ENCODE measurements at regions of chr11 and their contacts with region 1.

Region 1: DNA sequence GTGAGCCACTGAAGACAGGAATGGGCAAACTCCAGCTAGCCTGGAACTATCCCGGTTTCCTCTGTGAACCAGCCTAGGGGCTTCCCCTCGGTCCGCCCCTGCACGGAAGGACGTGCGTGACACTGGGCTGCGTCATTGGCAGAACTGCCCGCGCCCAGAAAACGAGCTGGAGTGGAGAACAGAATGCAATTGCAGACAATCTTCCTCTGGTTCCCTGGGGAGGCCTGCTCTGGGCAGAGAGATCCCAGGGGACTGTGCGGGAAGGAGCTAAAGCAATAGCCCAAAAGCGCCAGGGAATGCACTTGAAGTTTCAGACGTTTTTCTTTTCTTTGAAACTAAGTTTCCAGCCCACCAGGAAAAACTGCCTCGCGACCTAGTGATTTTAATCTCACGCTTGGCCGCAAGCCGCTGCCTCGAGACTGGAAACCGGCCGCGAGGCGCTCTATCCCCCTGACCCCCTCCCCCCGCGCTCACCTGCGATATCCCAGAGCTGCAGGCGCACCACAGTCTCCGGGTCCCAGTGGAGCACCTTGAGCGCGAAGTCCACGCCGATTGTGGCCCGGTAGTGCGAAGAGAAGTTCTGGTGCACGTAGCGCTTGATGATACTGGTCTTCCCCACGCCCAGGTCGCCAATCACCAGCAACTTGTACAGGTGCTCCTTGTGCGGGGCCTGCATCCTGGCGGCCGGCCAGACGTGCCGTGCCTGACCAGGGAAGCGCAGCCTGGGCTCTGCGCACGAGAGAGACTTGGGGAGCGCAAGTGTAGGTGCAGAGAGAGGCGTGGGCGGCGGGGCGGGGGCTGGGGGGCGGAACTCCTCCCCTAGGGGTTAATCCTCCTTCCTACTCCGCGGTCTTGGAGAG is at the start of gene RAB38:
- DNase-seq: peak; percentile 84
- H3K4me3 Mint-ChIP-seq: peak within 1 kb of the TSS; percentile 86
- H3K27ac Mint-ChIP-seq: peak within 1 kb of the TSS; percentile 84
- H3K4me1 Mint-ChIP-seq: peaks cover 43% of the 10 kb centered on the region
- H3K27me3 Mint-ChIP-seq: peaks cover 1% of the 10 kb centered on the region
- total RNA-seq, gene RAB38: 2.0 and 2.2 TPM in 2 replicates

Region 2: GRCh38 chr11:86740709-86741483 is 1434.0 kb before region 1 on chr11:
- intact Hi-C with region 1: loop called (anchors 10 kb)
- DNase-seq: peak; percentile 55
- H3K4me3 Mint-ChIP-seq: no peak overlapping the region
- H3K27ac Mint-ChIP-seq: peak overlapping the region; percentile 57
- H3K4me1 Mint-ChIP-seq: peaks cover 27% of the 10 kb centered on the region
- H3K27me3 Mint-ChIP-seq: no peaks in the 10 kb centered on the region

Region 3: DNA sequence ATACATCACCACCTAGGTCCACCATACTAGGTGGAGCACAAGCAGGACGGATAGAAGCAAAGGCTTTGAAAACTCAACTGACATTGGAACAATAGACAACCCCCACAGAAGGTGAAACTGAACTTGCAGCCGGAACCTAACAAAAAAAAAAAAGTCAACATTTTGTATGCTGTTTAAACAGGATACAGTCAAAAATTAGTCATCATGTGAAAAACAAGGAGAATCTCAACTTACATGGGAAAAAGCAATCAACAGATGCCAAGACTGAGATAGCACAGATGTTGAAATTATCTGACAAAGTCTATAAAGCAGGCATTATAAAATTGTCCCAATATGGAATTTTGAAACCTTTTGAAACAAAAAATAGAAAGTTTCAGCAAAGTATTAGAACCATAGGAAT is 123.5 kb before region 1 on chr11:
- intact Hi-C with region 1: no loop called
- DNase-seq: no peak
- H3K4me3 Mint-ChIP-seq: no peak overlapping the region
- H3K27ac Mint-ChIP-seq: no peak overlapping the region
- H3K4me1 Mint-ChIP-seq: peaks cover 2% of the 10 kb centered on the region
- H3K27me3 Mint-ChIP-seq: peaks cover 2% of the 10 kb centered on the region

Region 4: GRCh38 chr11:88146106-88146505 is 28.8 kb before region 1 on chr11:
- intact Hi-C with region 1: no loop called
- DNase-seq: no peak
- H3K4me3 Mint-ChIP-seq: no peak overlapping the region
- H3K27ac Mint-ChIP-seq: no peak overlapping the region
- H3K4me1 Mint-ChIP-seq: no peaks in the 10 kb centered on the region
- H3K27me3 Mint-ChIP-seq: peaks cover 2% of the 10 kb centered on the region

Region 5: GRCh38 chr11:88301488-88302140 is 126.7 kb after region 1 on chr11:
- intact Hi-C with region 1: loop called (anchors 1 kb)
- DNase-seq: peak; percentile 57
- H3K4me3 Mint-ChIP-seq: peak overlapping the region; percentile 44
- H3K27ac Mint-ChIP-seq: peak overlapping the region; percentile 94
- H3K4me1 Mint-ChIP-seq: peaks cover 35% of the 10 kb centered on the region
- H3K27me3 Mint-ChIP-seq: no peaks in the 10 kb centered on the region

Region 6: GRCh38 chr11:88421530-88421929 is 246.6 kb after region 1 on chr11:
- intact Hi-C with region 1: loop called (anchors 2 kb)
- DNase-seq: peak; percentile 83
- H3K4me3 Mint-ChIP-seq: peak overlapping the region; percentile 58
- H3K27ac Mint-ChIP-seq: peak overlapping the region; percentile 71
- H3K4me1 Mint-ChIP-seq: peaks cover 60% of the 10 kb centered on the region
- H3K27me3 Mint-ChIP-seq: no peaks in the 10 kb centered on the region

Region 7: DNA sequence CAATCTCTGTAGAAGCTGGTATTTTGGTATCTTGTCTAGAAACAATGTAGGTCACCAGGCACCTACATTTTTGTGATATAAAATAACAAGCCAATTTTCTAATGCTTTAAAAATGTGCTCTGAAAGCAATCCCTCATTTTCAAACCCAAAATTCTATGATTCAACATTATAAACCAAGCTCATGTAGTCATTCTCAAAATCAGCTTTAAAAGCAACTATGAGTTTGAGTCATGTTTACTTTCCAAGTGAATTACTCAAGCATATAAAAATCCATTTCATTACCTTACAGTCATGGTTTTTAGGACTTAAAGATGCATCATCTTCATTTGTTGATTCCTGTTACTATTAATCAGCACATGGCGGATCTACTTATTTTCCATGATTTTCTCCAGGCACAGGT is 674.4 kb after region 1 on chr11:
- intact Hi-C with region 1: loop called (anchors 10 kb)
- DNase-seq: no peak
- H3K4me3 Mint-ChIP-seq: no peak overlapping the region
- H3K27ac Mint-ChIP-seq: no peak overlapping the region
- H3K4me1 Mint-ChIP-seq: peaks cover 10% of the 10 kb centered on the region
- H3K27me3 Mint-ChIP-seq: peaks cover 3% of the 10 kb centered on the region